ENCODE measurements at regions of chr3 and their contacts with region 1.

Region 1: DNA sequence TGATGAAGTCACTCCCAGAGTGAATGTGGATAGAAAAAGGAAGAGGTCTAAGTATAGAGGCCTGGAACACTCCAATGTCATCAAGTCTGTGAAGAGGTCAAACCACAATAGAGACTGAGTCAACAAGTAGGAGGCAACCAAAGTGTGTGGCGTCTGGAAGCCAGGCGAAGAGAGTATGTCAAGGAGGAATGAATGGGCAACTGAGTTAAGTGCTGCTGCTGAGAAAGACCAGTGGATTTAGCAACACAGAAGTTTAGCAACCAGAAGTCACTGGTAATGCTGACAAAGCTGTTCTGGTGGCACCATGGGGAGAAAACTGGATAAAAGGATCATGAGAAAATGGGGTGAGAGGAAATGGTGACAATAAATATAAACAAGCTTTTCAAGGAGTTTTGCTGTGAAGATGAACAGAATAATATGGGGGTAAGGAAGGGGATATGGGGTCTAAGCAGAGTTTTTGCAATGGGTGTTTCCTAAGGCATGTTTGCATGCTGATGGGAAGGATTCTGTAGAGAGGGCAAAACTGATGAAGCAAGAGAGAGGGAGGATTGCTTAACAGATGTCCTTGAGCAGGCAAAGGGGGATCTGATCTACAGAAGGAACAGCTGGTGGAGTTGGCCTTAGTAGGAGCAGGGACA is 38.4 kb downstream of the PCOLCE2 start:
- DNase-seq: peak; percentile 77
- H3K4me3 ChIP-seq: no peak overlapping the region
- CTCF ChIP-seq: no peak

Region 2: GRCh38 chr3:142863010-142863715 is 12.7 kb after region 1 on chr3:
- CTCF ChIA-PET with region 1: interaction called, 10 read pairs
- POLR2A ChIA-PET with region 1: no interaction called
- DNase-seq: no peak
- H3K4me3 ChIP-seq: no peak overlapping the region
- CTCF ChIP-seq: no peak